ENCODE measurements at regions of chr1 and their contacts with region 1.

Region 1: DNA sequence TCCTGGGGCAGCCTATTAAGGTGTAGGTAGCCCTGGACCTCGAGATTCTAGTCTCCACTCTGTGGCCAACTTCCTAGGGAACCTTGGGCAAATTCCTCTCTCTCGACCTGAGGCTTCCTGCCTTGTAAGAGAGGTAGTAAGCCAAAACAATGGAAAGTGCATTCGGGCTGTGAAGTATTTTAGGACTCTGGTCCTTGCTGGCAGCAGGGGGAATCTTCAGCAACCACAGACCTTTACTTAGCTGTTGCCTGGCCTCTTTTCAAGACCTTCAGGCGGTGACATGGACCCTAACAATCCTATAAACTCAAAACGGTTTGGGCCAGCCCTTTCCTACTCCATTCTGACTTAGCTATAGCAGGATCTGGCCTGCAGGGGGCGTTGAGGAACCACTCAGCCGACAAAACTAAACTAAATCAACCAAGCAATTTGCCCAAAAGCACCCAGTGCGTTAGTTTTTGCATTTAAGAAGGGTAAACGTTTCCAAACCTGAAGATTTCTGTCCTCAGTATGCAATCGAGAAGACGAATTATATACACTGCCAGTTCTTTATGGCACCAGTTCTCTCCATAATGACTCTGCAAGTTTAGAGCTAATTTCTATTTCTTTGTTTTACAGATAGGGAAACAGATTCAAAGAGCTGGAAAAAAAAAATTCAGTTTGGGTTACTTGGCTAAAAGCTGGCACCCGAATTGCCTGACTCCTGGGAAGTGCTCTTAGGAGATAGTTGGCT is 10.9 kb upstream of the SESN2 start:
- DNase-seq: peak; percentile 93
- H3K4me3 Mint-ChIP-seq: peak overlapping the region; percentile 56
- H3K27ac Mint-ChIP-seq: peak overlapping the region; percentile 97
- H3K4me1 Mint-ChIP-seq: peaks cover 52% of the 10 kb centered on the region
- H3K27me3 Mint-ChIP-seq: no peaks in the 10 kb centered on the region

Region 2: GRCh38 chr1:27519331-27520258 is 728.9 kb before region 1 on chr1:
- CTCF ChIA-PET with region 1: no interaction called
- intact Hi-C with region 1: no loop called
- DNase-seq: no peak
- H3K4me3 Mint-ChIP-seq: no peak overlapping the region
- H3K27ac Mint-ChIP-seq: no peak overlapping the region
- H3K4me1 Mint-ChIP-seq: peaks cover 52% of the 10 kb centered on the region
- H3K27me3 Mint-ChIP-seq: no peaks in the 10 kb centered on the region

Region 3: DNA sequence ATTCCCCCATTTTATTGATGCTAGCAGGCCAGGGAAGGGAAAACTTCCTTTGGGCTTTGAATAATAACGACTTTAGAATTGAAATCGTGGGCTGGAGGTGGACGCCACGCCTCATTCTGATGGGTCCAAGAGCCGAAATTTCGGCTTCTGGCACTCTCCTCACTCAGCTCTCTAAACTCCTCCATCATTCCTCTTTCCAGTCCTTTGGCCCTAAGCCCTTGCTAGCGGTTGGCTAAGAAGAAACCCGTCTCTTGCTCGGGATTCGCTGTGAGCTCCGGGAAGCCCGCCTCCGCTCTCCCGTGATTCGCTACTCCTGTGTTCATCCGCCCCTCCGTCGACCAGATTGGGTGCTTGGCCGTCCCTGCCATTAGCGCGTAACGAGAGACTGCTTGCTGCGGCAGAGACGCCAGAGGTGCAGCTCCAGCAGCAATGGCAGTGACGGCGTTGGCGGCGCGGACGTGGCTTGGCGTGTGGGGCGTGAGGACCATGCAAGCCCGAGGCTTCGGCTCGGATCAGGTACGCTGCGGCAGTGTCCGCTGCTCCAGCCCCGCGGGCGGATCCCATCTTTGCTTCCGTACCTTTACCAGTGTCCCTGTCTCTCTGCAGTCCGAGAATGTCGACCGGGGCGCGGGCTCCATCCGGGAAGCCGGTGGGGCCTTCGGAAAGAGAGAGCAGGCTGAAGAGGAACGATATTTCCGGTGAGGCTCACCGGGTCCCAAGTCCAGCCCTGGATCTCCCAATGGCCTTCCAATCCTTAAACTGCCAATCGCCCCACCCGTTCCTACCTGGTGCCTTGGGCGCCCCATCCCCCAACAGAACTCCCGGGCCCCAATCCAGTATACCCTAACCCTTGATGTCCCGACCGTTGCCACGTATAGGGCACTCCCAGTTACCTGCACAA is 12.4 kb before region 1 on chr1 and contains the start of gene ATP5IF1:
- CTCF ChIA-PET with region 1: interaction called, 27 read pairs
- intact Hi-C with region 1: loop called (anchors 1 kb)
- DNase-seq: peak; percentile 98
- H3K4me3 Mint-ChIP-seq: no peak within 1 kb of the TSS
- H3K27ac Mint-ChIP-seq: no peak within 1 kb of the TSS
- H3K4me1 Mint-ChIP-seq: peaks cover 23% of the 10 kb centered on the region
- H3K27me3 Mint-ChIP-seq: no peaks in the 10 kb centered on the region
- total RNA-seq, gene ATP5IF1: 182 to 185 TPM

Region 4: DNA sequence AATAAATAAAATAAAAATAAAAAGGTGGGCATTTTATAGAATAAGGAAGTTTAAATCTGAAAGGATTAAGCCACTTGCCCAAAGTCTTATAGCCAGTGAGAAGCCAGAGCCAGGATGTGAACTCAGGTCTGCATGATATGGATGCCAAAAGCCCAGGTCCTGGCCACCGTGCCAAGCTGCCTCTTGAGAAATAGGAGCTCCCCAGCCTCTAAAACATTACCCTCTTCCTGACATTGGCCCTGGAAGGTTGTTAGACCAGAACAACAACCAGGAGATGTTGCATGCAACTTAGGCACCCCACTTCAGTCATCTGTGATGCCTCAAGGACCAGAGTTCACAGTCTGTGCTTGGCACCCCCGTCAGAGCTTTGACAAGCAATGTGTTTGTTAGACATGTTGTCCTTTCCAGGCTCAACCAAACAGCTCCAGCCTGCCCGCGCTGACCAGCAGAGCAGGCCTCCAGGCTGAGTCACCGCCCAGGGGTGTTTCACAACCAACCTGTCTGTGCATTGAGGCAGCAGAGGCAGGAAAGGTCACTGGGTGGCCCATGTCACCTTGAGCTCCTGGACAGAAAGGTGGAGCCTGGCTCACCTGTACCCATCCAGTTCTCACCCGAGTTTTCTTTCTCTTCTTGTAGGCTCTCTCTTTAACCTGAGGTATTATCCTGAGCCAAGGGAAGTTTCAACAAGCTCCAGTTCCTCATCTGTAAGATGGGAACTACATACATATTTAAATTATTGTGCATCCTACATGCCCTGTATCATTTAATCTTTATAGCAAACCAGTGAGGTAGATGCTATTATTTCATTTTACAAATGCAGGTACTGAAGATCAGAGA is 65.5 kb after region 1 on chr1:
- CTCF ChIA-PET with region 1: no interaction called
- intact Hi-C with region 1: no loop called
- DNase-seq: no peak
- H3K4me3 Mint-ChIP-seq: no peak overlapping the region
- H3K27ac Mint-ChIP-seq: no peak overlapping the region
- H3K4me1 Mint-ChIP-seq: no peaks in the 10 kb centered on the region
- H3K27me3 Mint-ChIP-seq: no peaks in the 10 kb centered on the region

Region 5: DNA sequence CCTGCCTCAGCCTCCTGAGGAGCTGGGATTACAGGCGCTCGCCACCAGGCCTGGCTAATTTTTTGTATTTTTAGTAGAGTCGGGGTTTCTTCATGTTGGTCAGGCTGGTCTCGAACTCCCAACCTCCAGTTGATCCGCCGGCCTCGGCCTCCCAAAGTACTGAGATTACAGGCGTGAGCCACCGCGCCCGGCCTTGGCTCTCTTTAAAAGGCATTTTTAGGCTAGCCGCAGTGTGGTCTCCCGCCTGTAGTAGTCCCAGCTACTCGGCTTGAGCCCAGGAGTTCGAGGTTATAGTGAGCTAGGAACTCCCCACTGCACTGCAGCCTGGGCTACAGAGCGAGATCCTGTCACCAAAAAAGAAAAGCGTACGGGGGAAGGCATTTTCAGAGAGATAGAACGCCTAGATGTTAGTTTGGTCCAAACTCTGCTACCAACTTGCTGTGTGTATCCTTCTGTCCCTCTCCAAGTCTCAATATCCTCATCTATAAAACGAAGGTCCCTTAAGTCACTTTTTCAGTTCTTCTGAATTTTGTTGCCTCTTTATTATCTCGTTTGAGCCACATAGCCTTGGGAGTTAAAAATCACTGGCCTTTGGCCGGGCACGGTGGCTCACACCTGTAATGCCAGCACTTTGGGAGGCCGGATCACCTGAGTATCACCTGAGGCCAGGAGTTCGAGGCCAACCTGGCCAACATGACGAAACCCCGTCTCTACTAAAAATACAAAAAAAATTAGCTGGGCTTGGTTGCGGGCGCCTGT is 81.1 kb after region 1 on chr1:
- CTCF ChIA-PET with region 1: interaction called, 19 read pairs
- intact Hi-C with region 1: loop called (anchors 1 kb)
- DNase-seq: peak; percentile 54
- H3K4me3 Mint-ChIP-seq: peak overlapping the region; percentile 94
- H3K27ac Mint-ChIP-seq: peak overlapping the region; percentile 98
- H3K4me1 Mint-ChIP-seq: peaks cover 38% of the 10 kb centered on the region
- H3K27me3 Mint-ChIP-seq: no peaks in the 10 kb centered on the region

Region 6: GRCh38 chr1:28449904-28450303 is 201.5 kb after region 1 on chr1:
- CTCF ChIA-PET with region 1: no interaction called
- intact Hi-C with region 1: loop called (anchors 1 kb)
- DNase-seq: peak; percentile 86
- H3K4me3 Mint-ChIP-seq: no peak overlapping the region
- H3K27ac Mint-ChIP-seq: peak overlapping the region; percentile 71
- H3K4me1 Mint-ChIP-seq: peaks cover 26% of the 10 kb centered on the region
- H3K27me3 Mint-ChIP-seq: no peaks in the 10 kb centered on the region

Region 7: DNA sequence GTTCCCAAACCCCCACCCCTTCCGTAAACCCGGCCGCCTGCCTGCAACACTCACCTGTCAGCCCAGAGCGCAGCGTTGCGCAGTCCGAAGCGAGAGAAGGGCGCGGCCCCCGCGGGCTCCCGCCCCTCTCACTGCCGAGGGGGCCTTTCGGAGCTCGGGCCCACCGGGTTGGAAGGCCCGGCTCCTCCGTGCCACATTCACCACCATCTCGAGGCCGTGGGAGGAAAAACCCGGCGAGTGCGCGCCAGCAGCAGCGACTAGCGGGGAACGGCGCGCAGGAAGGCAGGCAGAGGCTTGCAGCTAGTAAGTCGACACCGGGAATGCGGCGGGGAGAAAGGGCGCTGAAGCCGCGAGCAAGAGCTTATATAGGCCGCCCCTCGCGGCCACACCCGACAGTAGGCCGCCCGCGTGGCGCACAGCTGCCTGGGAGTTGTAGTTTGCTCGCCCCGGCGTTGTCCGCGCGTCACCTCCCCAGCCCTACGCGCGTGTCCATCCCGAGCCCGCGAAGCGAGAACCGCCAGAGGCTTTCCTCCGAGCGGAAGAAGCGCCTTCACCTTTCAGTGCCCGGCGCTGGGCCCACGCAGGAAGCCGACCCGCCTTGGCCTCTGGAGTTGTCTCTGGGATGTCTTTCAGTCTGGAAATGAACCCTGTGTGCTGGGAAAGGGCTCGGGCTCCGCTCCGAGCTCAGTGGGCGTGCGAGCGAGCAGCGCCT is 333.2 kb after region 1 on chr1:
- CTCF ChIA-PET with region 1: interaction called, 5 read pairs
- intact Hi-C with region 1: loop called (anchors 5 kb)
- DNase-seq: peak; percentile 94
- H3K4me3 Mint-ChIP-seq: peak overlapping the region; percentile 98
- H3K27ac Mint-ChIP-seq: peak overlapping the region; percentile 94
- H3K4me1 Mint-ChIP-seq: peaks cover 29% of the 10 kb centered on the region
- H3K27me3 Mint-ChIP-seq: no peaks in the 10 kb centered on the region

Region 8: DNA sequence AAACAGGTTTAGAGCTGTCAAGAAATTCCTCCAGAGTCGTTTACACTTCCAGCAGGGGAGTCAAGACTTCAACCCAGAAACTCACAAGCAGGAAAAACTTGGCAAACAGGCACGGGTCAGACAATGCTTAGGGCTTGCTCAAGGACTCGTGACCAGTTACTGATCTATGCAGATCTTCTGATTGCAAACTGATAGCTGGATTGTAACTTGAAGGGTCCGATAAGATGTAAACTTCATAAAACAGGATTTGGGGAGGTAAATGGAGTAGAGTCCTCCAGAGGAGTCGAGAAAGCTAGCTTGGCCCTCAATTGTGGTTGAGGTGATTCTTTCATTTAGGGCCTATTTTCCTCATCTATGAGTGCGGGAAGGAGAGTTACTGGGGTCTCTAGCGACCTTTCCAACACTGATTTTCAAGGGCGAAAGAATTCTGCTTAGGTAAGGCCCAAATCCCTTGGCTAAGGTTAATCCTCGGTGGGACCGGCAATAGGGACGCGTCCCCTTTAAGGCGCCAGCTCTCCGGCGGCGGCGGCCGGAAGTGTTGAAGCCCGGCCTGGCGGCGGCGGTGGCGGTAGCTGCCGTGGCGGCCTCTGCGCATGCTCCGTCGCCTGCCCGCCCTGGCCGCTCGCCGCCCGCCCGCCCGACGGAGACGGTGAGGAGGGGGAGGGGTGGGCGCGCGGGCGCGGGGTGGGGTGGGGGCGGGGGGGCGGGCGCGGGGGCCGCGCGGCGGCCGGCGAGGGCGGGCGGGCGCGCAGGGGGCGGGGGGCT is 419.9 kb after region 1 on chr1 and contains the start of gene GMEB1:
- CTCF ChIA-PET with region 1: no interaction called
- intact Hi-C with region 1: loop called (anchors 5 kb)
- DNase-seq: peak; percentile 87
- H3K4me3 Mint-ChIP-seq: peak within 1 kb of the TSS; percentile 86
- H3K27ac Mint-ChIP-seq: peak within 1 kb of the TSS; percentile 96
- H3K4me1 Mint-ChIP-seq: peaks cover 11% of the 10 kb centered on the region
- H3K27me3 Mint-ChIP-seq: no peaks in the 10 kb centered on the region
- total RNA-seq, gene GMEB1: 15.8 to 16.3 TPM